ENCODE measurements at regions of chr20 and their contacts with region 1.

Region 1: DNA sequence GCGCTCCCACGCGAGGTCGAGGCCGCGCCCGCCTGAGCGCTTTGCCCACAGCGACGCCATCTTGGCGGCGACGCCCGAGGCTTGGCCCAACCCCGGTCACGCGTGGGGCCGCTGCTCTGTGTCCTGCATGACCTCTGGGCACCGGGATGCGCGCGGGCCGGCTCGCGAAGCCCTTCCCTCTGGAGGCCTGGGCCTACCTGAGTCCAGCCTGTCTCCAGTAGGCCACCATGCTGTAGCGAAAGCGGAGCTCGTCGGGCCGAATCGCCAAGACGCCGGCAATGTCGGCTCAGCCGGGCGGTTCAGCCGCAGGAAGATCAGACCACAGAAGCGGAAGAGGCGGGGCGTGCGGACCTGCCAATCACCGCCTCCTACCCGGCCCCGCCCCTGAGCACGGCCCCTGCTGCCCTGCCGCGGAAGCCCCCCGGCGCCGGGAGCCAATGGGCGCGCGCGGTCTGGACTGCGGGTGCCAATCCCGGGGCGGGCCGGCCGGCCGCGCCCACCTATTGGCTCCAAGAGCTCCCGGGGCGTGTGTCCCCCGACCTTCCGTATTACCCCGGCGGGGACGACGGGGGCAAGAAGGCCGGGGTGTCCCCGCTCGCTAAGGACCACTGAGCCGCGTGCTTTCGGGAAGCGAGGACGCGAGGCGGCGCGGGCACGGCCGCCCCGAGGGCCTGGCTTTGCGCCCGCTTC is at the start of gene ATP5F1E:
- DNase-seq: peak; percentile 99
- H3K4me3 Mint-ChIP-seq: peak within 1 kb of the TSS; percentile 95
- H3K27ac Mint-ChIP-seq: peak within 1 kb of the TSS; percentile 97
- H3K4me1 Mint-ChIP-seq: peaks cover 56% of the 10 kb centered on the region
- H3K27me3 Mint-ChIP-seq: no peaks in the 10 kb centered on the region
- total RNA-seq, gene ATP5F1E: 69.9 and 70.9 TPM in 2 replicates

Region 2: DNA sequence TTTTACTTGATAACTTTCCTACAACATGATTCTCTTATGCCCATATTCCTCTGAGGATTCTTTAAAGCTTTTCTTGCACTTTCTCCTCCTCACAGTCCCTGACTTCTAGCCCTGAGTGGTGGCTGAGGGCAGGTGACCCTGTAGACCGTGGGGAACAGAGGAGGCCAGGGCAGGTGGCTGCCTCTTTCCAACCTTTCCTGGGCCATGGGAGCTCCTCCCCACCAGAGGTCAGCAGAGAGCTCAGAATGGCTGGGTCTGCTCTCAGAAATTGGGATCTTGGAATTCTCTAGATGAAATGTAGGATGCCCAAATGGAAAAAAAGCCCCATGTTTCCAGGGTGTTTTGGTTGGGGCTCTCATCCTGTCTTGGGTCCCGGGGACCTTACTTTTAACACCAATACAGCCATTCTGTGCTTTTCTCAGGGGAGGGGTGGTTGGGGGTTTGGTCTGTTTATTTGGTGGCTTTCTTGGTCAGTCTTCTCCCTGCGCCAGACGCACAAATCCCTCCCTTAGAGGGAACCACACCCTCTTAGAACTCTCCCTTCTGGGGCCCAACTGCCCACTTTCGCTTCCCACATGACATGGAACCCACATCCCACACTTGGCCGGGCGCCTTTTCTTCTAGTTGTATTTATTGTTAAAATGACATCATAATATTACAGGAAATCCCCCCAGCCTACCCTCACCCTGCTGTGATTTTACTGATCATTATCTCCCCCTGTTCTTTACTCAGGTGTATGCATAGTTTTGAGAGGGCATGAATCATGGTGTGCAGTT is 161.7 kb before region 1 on chr20:
- intact Hi-C with region 1: no loop called
- DNase-seq: peak; percentile 86
- H3K4me3 Mint-ChIP-seq: no peak overlapping the region
- H3K27ac Mint-ChIP-seq: no peak overlapping the region
- H3K4me1 Mint-ChIP-seq: peaks cover 7% of the 10 kb centered on the region
- H3K27me3 Mint-ChIP-seq: peaks cover 27% of the 10 kb centered on the region

Region 3: GRCh38 chr20:58890518-58891085 is 141.6 kb before region 1 on chr20:
- intact Hi-C with region 1: loop called (anchors 1 kb)
- DNase-seq: peak; percentile 87
- H3K4me3 Mint-ChIP-seq: peak overlapping the region; percentile 94
- H3K27ac Mint-ChIP-seq: peak overlapping the region; percentile 97
- H3K4me1 Mint-ChIP-seq: peaks cover 38% of the 10 kb centered on the region
- H3K27me3 Mint-ChIP-seq: no peaks in the 10 kb centered on the region

Region 4: GRCh38 chr20:58980700-58981627 is 51.2 kb before region 1 on chr20 and contains the start of gene NELFCD:
- intact Hi-C with region 1: loop called (anchors 2 kb)
- DNase-seq: peak; percentile 97
- H3K4me3 Mint-ChIP-seq: peak within 1 kb of the TSS; percentile 94
- H3K27ac Mint-ChIP-seq: peak within 1 kb of the TSS; percentile 91
- H3K4me1 Mint-ChIP-seq: peaks cover 27% of the 10 kb centered on the region
- H3K27me3 Mint-ChIP-seq: peaks cover 9% of the 10 kb centered on the region
- total RNA-seq, gene NELFCD: 119 and 120 TPM in 2 replicates

Region 5: GRCh38 chr20:59006864-59007664 is 25.1 kb before region 1 on chr20 and contains the start of gene CTSZ:
- intact Hi-C with region 1: loop called (anchors 1 kb)
- DNase-seq: peak; percentile 87
- H3K4me3 Mint-ChIP-seq: peak within 1 kb of the TSS; percentile 89
- H3K27ac Mint-ChIP-seq: peak within 1 kb of the TSS; percentile 91
- H3K4me1 Mint-ChIP-seq: peaks cover 45% of the 10 kb centered on the region
- H3K27me3 Mint-ChIP-seq: no peaks in the 10 kb centered on the region
- total RNA-seq, gene CTSZ: 48.1 and 51.1 TPM in 2 replicates

Region 6: GRCh38 chr20:59042796-59043660 is 10.9 kb after region 1 on chr20:
- intact Hi-C with region 1: loop called (anchors 1 kb)
- DNase-seq: peak; percentile 99
- H3K4me3 Mint-ChIP-seq: peak overlapping the region; percentile 93
- H3K27ac Mint-ChIP-seq: peak overlapping the region; percentile 96
- H3K4me1 Mint-ChIP-seq: peaks cover 42% of the 10 kb centered on the region
- H3K27me3 Mint-ChIP-seq: no peaks in the 10 kb centered on the region

Region 7: GRCh38 chr20:59149651-59150504 is 117.7 kb after region 1 on chr20:
- intact Hi-C with region 1: loop called (anchors 5 kb)
- DNase-seq: peak; percentile 94
- H3K4me3 Mint-ChIP-seq: peak overlapping the region; percentile 64
- H3K27ac Mint-ChIP-seq: peak overlapping the region; percentile 89
- H3K4me1 Mint-ChIP-seq: peaks cover 72% of the 10 kb centered on the region
- H3K27me3 Mint-ChIP-seq: no peaks in the 10 kb centered on the region

Measured in activated CD4-positive, alpha-beta T cell treated with anti-CD3 and anti-CD28 coated beads, Interleukin-2, amount 10 ng/mL, durations not matched to agents 24 days and 14 days (primary cell).